Cardiac septum (tissue), 1 donor: ENCODE measurements at regions of chr9 and their contacts with region 1.

Region 1: GRCh38 chr9:105330755-105331154 is 86.3 kb downstream of the SLC44A1 start:
- DNase-seq: no peak

Region 2: DNA sequence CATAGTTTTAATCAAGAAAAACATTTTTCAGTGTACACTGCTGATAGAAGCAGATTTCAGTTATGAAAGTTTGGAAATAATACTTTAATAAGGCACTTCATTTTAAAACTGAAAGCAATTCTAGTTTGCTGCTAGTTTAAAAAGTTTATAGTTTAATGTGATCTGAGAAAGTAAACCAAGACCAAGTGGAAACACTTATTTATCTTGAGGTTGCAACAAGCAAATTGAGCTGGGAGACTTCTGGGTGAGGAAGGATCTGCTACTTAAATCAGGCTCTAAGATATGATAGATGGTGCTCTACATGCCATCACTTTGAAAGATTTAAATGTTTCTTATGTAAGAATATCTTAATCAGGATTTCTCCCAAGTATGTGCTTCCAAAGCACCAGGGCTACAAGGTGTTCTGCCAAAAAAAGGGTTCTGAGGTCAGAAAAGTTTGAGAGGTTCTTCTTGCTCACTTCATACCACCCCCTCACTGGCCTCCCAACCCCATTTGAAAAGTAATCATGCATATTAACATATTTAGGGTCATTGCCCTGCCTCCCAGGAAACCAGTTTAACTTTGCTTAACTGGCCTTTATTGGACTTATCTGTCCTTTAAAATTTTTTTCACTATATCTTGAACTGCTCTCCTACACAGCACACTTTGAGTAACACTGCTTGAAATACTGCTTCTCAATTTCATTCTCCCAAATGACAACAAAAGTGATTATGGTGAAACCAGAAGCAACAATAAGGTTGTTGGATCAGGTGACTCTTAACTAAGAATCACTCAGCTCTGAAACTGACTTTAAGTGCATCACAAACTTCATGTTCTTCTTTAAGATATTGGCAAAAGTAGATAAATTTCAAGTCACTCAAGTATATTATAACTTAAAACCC is 70.8 kb before region 1 on chr9:
- intact Hi-C with region 1: loop called (anchors 10 kb)
- DNase-seq: no peak

Region 3: DNA sequence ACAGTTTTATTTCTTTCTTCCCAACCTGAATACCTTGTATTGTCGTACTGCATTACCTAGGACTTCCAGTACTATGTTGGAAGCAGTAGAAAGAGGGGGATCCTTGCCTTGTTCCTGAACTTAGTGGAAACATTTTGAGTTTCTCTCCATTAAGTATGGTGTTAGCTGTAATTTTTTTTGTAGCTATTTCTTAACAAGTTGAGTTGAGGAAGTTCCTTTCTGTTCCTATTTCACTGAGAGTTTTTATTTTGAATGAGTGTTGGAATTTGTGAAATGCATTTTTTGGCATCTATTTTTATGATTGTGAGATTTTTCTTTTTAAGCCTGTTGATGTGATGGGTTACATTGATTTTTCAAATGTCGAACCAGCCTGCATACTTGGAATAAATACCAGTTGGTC is 166.1 kb after region 1 on chr9:
- intact Hi-C with region 1: no loop called
- DNase-seq: no peak